ENCODE measurements at regions of chr20 and their contacts with region 1.

Region 1: GRCh38 chr20:18451195-18451594 is 15.6 kb downstream of the DZANK1 start:
- DNase-seq: no peak
- H3K4me3 ChIP-seq: no peak overlapping the region
- H3K27ac ChIP-seq: no peak overlapping the region
- H3K4me1 ChIP-seq: no peaks in the 10 kb centered on the region
- H3K27me3 ChIP-seq: no peaks in the 10 kb centered on the region
- CTCF ChIP-seq: no peak
- EP300 ChIP-seq: no peak
- POLR2A ChIP-seq: no peak

Region 2: DNA sequence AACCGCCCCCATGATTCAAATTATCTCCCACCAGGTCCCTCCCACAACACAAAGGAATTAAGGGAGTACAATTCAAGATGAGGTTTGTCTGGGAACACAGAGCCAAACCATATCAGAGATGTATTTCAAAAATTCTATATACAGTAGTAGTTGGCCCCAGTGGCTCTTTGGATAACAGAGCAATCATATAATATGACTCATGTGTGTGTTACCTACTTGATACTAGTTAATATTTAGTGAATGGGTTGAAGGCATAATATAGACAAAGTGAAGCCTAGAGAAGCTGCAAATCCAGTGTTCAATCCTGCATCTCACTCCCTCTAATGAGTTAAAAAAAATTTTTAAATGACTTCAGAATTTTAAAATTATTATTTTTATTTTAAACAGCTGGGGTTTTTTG is 270.4 kb before region 1 on chr20:
- intact Hi-C with region 1: no loop called
- DNase-seq: no peak
- H3K4me3 ChIP-seq: no peak overlapping the region
- H3K27ac ChIP-seq: no peak overlapping the region
- H3K4me1 ChIP-seq: no peaks in the 10 kb centered on the region
- H3K27me3 ChIP-seq: no peaks in the 10 kb centered on the region
- CTCF ChIP-seq: no peak
- EP300 ChIP-seq: no peak
- POLR2A ChIP-seq: no peak

Region 3: DNA sequence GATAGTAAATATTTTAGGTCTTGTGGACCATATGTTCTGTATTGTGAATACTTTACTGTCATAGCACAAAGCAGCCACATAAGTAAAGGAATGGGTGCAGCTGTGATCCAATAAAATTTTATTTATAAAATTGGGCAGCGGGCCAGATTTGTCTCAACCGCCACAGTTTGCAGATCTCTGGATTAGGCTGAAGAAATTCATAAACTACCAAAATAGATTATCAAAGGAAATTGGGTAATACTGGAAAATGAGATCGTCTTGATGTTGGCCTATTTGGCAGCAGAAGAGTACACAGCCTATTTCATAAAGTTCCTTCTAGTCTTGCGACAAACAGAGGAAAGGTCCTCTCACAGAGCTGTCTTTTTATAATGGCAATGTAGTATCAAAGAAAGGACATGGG is 54.2 kb before region 1 on chr20:
- intact Hi-C with region 1: loop called (anchors 10 kb)
- DNase-seq: peak in 1 of 2 donors; percentile 20
- H3K4me3 ChIP-seq: no peak overlapping the region
- H3K27ac ChIP-seq: no peak overlapping the region
- H3K4me1 ChIP-seq: no peaks in the 10 kb centered on the region
- H3K27me3 ChIP-seq: no peaks in the 10 kb centered on the region
- CTCF ChIP-seq: no peak
- EP300 ChIP-seq: no peak
- POLR2A ChIP-seq: no peak

Region 4: DNA sequence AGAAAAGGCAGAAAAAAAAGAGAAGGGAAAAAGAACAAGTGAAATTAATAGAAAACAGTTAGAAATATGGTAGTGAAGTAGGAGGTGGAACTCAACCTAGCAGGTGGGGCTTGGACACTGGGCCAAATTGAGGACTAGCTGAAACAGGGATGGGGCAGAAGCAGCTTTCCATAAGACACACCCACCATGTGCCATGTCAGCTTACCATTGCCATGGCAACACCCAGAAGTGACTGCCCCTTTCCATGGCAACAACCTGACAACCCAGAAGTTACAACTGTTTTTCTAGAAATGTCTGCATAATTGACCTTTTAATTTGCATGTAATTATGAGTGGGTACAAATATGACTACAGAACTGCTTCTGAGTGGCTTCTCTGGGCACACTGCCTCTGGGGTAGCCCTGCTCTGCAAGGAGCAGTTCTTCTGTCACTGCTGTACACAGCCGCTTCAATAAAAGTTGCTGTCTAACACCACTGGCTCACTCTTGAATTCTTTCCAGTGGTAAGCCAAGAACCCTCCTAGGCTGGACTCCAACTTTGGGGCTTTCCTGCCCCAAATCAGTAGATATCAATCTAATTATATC is 725.4 kb after region 1 on chr20:
- intact Hi-C with region 1: no loop called
- DNase-seq: no peak
- H3K4me3 ChIP-seq: no peak overlapping the region
- H3K27ac ChIP-seq: no peak overlapping the region
- H3K4me1 ChIP-seq: no peaks in the 10 kb centered on the region
- H3K27me3 ChIP-seq: no peaks in the 10 kb centered on the region
- CTCF ChIP-seq: no peak
- EP300 ChIP-seq: no peak
- POLR2A ChIP-seq: no peak

Measured in stomach (tissue), 19 donors.